Heart left ventricle (tissue), 16 donors: ENCODE measurements at regions of chr11 and their contacts with region 1.

Region 1: DNA sequence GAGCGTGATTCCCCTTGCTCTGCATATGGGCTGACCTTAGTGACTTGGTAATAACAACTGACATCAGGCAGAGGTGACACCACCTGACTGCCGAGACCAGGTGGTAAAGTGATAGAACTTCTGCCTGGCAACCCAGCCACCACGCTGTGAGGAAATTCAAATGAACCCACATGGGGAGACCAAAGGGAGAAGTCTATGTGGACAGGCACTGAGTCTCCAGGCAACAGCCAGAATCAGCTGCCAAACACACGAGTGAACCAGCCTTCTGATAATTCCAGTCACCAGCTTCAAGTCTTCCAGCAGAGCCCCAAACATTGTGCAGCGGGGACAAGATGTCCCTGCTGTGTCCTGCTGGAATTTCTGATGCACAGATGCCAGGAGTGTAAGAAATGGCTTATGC is 29.7 kb downstream of the SPATA19 start:
- DNase-seq: peak in 2 of 5 donors; percentile 55 to 63
- ATAC-seq: peak; percentile 76 to 95 (median 87)
- H3K4me3 ChIP-seq: no peak overlapping the region
- H3K27ac ChIP-seq: no peak overlapping the region
- H3K4me1 ChIP-seq: peaks cover 0 to 14% (median 0%) of the 10 kb centered on the region in 12 donors
- H3K27me3 ChIP-seq: peaks cover 0 to 5% (median 0%) of the 10 kb centered on the region in 9 donors
- CTCF ChIP-seq: no peak
- POLR2A ChIP-seq: no peak

Region 2: DNA sequence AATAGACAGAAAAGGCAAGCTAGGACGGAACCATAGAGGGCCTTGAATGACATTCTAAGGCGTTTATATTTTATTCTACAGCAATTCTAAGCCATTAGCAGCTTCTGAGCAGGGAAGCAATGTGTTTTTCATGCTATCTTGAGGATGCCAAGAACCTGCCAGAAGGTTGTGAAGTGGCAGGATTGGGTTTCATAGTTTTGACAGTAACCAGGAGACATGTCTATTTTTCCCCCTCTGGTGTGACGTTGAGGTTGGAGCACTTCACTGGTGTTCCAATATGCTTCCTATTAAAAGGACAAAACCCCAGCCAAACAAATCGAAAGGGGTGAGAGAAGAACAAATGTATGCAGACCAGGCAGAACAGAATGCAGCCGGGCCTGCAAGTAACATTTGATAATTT is 118.5 kb before region 1 on chr11:
- intact Hi-C with region 1: loop called in 1 of 10 experiments (anchors 5 kb)
- DNase-seq: peak in 4 of 5 donors; percentile 30 to 68 (median 41)
- ATAC-seq: peak; percentile 79 to 87 (median 84)
- H3K4me3 ChIP-seq: no peak overlapping the region
- H3K27ac ChIP-seq: peak overlapping the region in 11 of 12 donors; percentile 15 to 87 (median 70)
- H3K4me1 ChIP-seq: peaks cover 0 to 12% (median 0%) of the 10 kb centered on the region in 12 donors
- H3K27me3 ChIP-seq: no peaks in the 10 kb centered on the region
- CTCF ChIP-seq: no peak
- POLR2A ChIP-seq: no peak

Region 3: DNA sequence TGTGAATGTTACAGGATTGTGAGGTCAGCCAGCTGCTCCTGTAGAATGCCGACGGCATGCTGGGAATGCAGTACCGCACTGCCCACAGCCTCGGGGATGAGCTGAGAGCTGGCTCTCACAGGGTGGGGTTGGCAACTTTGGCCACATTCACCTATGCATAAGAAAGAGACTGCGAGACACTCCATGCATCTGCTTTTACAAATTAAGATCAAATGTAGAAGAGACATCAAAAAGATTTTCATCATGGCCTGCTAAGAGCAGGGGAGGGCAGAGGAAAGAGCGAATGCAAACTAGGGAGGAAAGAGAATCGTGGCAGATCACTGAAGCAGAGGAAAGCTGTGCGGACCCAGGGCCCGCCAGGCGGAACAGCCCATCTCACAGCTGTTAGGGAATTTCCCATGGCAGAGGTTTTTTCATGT is 79.4 kb after region 1 on chr11:
- intact Hi-C with region 1: no loop called
- DNase-seq: peak in 1 of 5 donors; percentile 4
- ATAC-seq: peak in 3 of 4 donors; percentile 13 to 41 (median 30)
- H3K4me3 ChIP-seq: no peak overlapping the region
- H3K27ac ChIP-seq: no peak overlapping the region
- H3K4me1 ChIP-seq: peaks cover 0 to 11% (median 0%) of the 10 kb centered on the region in 12 donors
- H3K27me3 ChIP-seq: no peaks in the 10 kb centered on the region
- CTCF ChIP-seq: no peak
- POLR2A ChIP-seq: no peak

Region 4: DNA sequence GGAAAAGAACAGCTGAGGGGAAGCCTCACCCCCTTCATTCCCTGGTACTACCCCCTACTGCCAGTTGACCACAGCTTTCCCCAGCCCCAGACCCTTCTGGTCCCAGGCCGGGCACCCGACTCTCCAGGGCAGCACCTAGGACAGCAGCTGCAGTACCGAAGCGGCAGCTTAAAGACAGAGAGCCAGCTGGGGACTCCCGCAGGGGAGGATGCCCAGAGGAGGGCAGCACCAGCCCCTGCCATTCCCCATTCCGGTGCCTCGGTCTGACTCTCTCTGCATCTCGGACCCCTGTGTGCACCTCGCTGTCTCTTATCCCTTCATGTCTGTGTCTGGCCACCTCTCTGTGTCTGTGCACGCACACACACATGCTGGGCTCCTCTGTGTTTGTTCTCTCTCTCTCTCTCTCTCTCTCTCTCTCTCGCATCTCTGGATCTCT is 131.7 kb after region 1 on chr11:
- intact Hi-C with region 1: no loop called
- DNase-seq: peak; percentile 64 to 70 (median 67)
- ATAC-seq: peak; percentile 26 to 51 (median 43)
- H3K4me3 ChIP-seq: peak overlapping the region in 6 of 12 donors; percentile 11 to 42 (median 20)
- H3K27ac ChIP-seq: peak overlapping the region in 10 of 12 donors; percentile 27 to 98 (median 77)
- H3K4me1 ChIP-seq: peaks cover 14 to 86% (median 70%) of the 10 kb centered on the region in 12 donors
- H3K27me3 ChIP-seq: no peaks in the 10 kb centered on the region
- CTCF ChIP-seq: peak in 11 of 12 donors; percentile 23 to 64 (median 47)
- POLR2A ChIP-seq: no peak